AG04450 (cell line): ENCODE measurements at regions of chr2 and their contacts with region 1.

Region 1: GRCh38 chr2:25664183-25664964 is 9.0 kb downstream of the DTNB start:
- DNase-seq: peak; percentile 44
- H3K4me3 ChIP-seq: no peak overlapping the region
- H3K27ac ChIP-seq: no peak overlapping the region
- H3K27me3 ChIP-seq: no peaks in the 10 kb centered on the region
- CTCF ChIP-seq: peak; percentile 85

Region 2: GRCh38 chr2:25309402-25309801 is 355.0 kb before region 1 on chr2:
- CTCF ChIA-PET with region 1: interaction called, 27 read pairs
- POLR2A ChIA-PET with region 1: no interaction called
- DNase-seq: no peak
- H3K4me3 ChIP-seq: no peak overlapping the region
- H3K27ac ChIP-seq: no peak overlapping the region
- H3K27me3 ChIP-seq: no peaks in the 10 kb centered on the region
- CTCF ChIP-seq: peak; percentile 54

Region 3: DNA sequence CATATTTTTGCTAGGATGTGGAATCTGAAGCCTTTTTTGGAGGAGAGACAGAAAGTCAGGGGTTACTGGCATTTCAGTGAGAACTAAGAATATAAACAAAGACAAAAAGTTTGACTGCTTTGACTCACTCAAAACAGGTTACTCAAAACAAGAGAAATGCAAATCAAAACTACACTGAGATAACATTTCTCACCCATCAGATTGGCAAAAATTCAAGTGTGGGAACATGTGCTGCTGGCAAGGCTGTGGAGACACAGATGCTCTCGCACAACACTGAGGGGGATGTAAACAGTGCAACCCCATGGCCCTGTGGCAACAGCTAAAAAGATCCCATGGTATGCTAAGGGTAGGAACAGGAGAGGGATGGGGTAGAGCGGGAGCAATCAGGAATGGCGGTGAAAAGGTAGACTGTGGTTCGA is 77.6 kb before region 1 on chr2:
- CTCF ChIA-PET with region 1: interaction called, 13 read pairs
- POLR2A ChIA-PET with region 1: no interaction called
- DNase-seq: peak; percentile 13
- H3K4me3 ChIP-seq: no peak overlapping the region
- H3K27ac ChIP-seq: no peak overlapping the region
- H3K27me3 ChIP-seq: no peaks in the 10 kb centered on the region
- CTCF ChIP-seq: no peak

Region 4: GRCh38 chr2:25606892-25607291 is 57.5 kb before region 1 on chr2:
- CTCF ChIA-PET with region 1: interaction called, 198 read pairs
- POLR2A ChIA-PET with region 1: no interaction called
- DNase-seq: no peak
- H3K4me3 ChIP-seq: no peak overlapping the region
- H3K27ac ChIP-seq: no peak overlapping the region
- H3K27me3 ChIP-seq: no peaks in the 10 kb centered on the region
- CTCF ChIP-seq: peak; percentile 55

Region 5: GRCh38 chr2:25651071-25651470 is 13.3 kb before region 1 on chr2:
- CTCF ChIA-PET with region 1: interaction called, 30 read pairs
- POLR2A ChIA-PET with region 1: no interaction called
- DNase-seq: no peak
- H3K4me3 ChIP-seq: no peak overlapping the region
- H3K27ac ChIP-seq: no peak overlapping the region
- H3K27me3 ChIP-seq: no peaks in the 10 kb centered on the region
- CTCF ChIP-seq: no peak